KBM-7 (cell line): ENCODE measurements at regions of chr5 and their contacts with region 1.

Region 1: DNA sequence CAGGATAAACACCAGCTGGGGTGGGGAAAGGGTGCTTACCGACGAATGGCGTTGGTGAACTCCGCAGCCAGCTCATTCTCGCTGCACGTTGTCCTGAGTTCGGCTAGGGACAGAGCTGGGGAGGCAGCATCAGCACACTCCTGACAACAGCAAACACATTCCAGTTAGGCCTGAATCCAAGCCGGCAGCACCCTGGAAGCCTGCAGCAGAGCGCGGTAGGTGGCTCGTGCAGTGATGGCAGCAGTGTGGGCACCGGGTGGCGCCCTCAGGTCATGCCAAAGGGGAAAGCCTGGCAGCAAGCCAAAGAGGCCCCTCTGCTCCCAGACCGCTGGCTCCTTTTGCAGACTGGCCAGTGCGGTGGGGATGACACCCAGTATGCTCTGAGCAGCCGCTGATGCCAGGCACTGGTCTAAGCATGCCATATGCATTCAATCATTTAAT is 66.9 kb downstream of the DCP2 start:
- DNase-seq: no peak

Region 2: GRCh38 chr5:113581388-113581787 is 537.9 kb after region 1 on chr5:
- in situ Hi-C with region 1: loop called (anchors 25 kb)
- DNase-seq: no peak